AG04449 (cell line): ENCODE measurements at regions of chr15 and their contacts with region 1.

Region 1: GRCh38 chr15:40421246-40422157 is 15.9 kb downstream of the IVD start:
- DNase-seq: no peak
- H3K4me3 ChIP-seq: no peak overlapping the region; the same call in 1 of the 2 replicates
- CTCF ChIP-seq: peak; percentile 97

Region 2: GRCh38 chr15:40182358-40183029 is 239.0 kb before region 1 on chr15:
- CTCF ChIA-PET with region 1: no interaction called
- POLR2A ChIA-PET with region 1: no interaction called
- DNase-seq: no peak
- H3K4me3 ChIP-seq: no peak overlapping the region
- CTCF ChIP-seq: no peak

Region 3: DNA sequence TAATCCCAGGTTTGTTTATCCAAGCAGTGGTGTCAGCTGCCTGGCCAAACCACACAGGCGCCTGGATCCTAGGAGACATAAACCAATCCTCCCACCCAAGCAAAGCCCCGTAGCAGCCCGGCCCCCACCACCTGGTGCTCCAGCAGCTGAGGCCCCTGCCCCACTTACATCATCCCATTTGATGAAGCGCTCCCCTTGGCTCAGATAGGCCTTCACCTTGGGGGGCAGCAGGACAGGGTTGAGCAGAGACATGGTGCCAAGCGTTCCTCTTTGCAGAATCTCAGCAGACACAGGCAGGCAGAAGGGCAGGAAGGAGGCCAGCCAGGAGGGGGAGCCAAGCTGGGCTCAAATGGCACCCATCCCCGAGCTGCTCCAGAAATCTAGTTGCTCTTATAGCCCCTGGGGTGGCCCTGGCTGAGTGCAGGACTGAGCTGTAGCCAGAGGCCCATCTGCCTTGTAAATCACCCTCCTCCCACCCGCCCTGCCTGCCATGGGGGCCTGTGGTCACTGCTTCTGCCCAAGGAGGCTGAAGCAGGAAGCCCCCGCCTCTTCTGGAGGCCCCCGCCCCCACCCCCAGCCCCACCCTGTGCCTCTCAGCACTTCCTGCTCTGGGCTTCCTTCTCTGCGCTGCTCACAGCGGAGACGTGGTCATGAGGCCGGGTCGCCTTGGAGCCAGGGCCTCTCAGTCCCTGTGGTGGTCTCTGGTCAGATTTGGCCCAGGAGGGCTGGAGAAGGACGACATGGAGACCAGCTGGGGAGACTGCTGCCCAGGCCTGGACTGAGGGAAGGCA is 113.9 kb before region 1 on chr15 and contains the start of gene PLCB2:
- CTCF ChIA-PET with region 1: interaction called, 17 read pairs
- POLR2A ChIA-PET with region 1: no interaction called
- DNase-seq: no peak
- H3K4me3 ChIP-seq: no peak within 1 kb of the TSS
- CTCF ChIP-seq: peak; percentile 52

Region 4: GRCh38 chr15:40338041-40338657 is 83.4 kb before region 1 on chr15:
- CTCF ChIA-PET with region 1: interaction called, 67 read pairs
- POLR2A ChIA-PET with region 1: interaction called, 3 read pairs
- DNase-seq: no peak
- H3K4me3 ChIP-seq: peak overlapping the region; percentile 48
- CTCF ChIP-seq: peak; percentile 84

Region 5: DNA sequence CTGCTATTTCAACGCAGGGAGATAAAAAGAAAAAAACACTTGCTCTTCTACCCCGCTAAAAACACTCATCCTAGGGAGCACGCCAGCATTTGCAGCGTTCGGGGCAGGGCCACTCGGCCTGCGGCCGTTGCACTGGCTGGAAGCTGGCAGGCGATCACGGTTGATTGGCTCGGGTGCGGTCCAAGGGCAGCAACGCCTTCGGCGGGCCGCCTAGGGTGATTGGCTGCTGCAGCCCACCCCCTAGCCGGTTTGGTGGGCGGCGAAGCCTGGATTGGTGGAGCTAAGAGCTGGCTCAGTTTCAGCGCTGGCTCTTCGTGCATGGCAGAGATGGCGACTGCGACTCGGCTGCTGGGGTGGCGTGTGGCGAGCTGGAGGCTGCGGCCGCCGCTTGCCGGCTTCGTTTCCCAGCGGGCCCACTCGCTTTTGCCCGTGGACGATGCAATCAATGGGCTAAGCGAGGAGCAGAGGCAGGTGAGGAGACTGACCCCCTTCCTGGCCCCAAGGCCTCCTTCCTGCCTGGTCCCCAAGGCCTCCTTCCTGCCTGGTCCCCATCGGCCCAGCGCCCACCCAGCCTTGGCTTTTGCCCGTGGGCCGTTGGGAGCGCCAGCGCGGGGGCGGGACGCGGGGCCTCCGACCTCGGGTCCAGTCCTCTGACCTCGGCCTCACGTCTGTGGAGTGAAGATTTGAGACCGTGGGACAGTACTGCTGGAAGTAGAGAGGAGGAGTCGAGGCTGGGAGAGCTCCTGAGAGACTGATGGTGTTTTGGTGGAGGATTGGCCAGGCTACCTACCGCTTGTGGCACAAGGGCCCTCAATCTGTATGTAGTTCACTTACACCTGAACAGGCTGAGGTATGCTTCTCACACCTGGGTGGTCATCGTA is 15.8 kb before region 1 on chr15 and contains the start of gene IVD:
- CTCF ChIA-PET with region 1: interaction called, 22 read pairs
- POLR2A ChIA-PET with region 1: interaction called, 4 read pairs
- DNase-seq: peak; percentile 71
- H3K4me3 ChIP-seq: peak within 1 kb of the TSS; percentile 93
- CTCF ChIP-seq: no peak

Region 6: GRCh38 chr15:40506964-40507571 is 85.6 kb after region 1 on chr15:
- CTCF ChIA-PET with region 1: interaction called, 10 read pairs
- POLR2A ChIA-PET with region 1: no interaction called
- DNase-seq: no peak
- H3K4me3 ChIP-seq: peak overlapping the region; percentile 43
- CTCF ChIP-seq: peak; percentile 89